Tibial artery (tissue), 4 donors: ENCODE measurements at regions of chr1 and their contacts with region 1.

Region 1: DNA sequence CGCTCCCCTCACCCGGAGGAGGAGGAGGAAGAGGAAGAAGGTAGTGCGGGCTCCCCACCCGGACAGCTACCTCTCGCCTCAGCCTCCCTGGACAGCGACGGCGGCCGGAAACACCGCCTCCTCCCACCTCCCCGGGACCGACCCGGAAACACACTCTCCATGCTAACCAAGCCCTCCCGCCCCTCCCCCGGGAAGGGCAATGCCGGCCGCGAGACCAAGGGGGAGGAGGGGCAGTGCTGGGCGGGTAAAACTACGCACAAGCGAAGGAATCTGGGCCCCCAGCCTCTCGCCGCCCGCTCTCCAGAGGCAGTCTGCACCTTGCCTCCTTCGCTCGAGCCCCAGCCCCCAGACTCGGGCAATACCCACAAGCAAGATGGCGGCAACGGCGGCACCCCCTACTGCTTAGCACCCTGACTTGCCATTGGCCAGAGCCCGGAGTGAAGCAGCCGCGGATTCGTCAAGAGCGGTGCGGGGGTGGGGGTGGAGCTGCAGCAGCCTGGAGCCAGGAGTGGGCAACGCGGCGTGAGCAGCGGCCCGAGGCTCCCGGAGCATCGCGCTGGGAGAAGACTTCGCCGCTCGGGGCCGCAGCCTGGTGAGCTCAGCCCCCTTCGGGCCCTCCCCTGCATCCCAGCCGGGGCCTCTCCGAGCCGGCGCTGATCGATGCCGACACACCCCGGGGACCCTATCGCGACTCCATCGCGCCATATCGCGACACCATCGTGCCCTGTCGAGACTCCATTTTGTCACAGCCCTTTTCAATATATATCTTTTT is at the starts of genes KIAA0319L and NCDN:
- DNase-seq: peak; percentile 97 to 98
- H3K4me3 ChIP-seq: peak within 1 kb of the TSS; percentile 86 to 98
- H3K27ac ChIP-seq: peak within 1 kb of the TSS; percentile 96 to 98
- H3K4me1 ChIP-seq: peaks cover 3 to 68% (median 44%) of the 10 kb centered on the region in 4 donors
- H3K27me3 ChIP-seq: no peaks in the 10 kb centered on the region
- CTCF ChIP-seq: no peak

Region 2: GRCh38 chr1:35192853-35193664 is 364.4 kb before region 1 on chr1 and contains the start of gene SFPQ:
- intact Hi-C with region 1: loop called (anchors 5 kb)
- DNase-seq: peak; percentile 98 to 99
- H3K4me3 ChIP-seq: peak within 1 kb of the TSS; percentile 96 to 100
- H3K27ac ChIP-seq: peak within 1 kb of the TSS; percentile 99
- H3K4me1 ChIP-seq: peaks cover 0 to 38% (median 33%) of the 10 kb centered on the region in 4 donors
- H3K27me3 ChIP-seq: no peaks in the 10 kb centered on the region
- CTCF ChIP-seq: no peak

Region 3: GRCh38 chr1:35451125-35451528 is 106.4 kb before region 1 on chr1:
- intact Hi-C with region 1: loop called (anchors 2 kb)
- DNase-seq: peak; percentile 81 to 88
- H3K4me3 ChIP-seq: no peak overlapping the region
- H3K27ac ChIP-seq: no peak overlapping the region
- H3K4me1 ChIP-seq: peaks cover 0 to 27% (median 25%) of the 10 kb centered on the region in 4 donors
- H3K27me3 ChIP-seq: no peaks in the 10 kb centered on the region
- CTCF ChIP-seq: peak; percentile 81 to 82

Region 4: GRCh38 chr1:35641233-35641866 is 83.9 kb after region 1 on chr1 and contains the start of gene PSMB2:
- intact Hi-C with region 1: loop called (anchors 5 kb)
- DNase-seq: peak; percentile 94 to 96
- H3K4me3 ChIP-seq: peak within 1 kb of the TSS; percentile 89 to 92
- H3K27ac ChIP-seq: peak within 1 kb of the TSS; percentile 90 to 93
- H3K4me1 ChIP-seq: peaks cover 0 to 47% (median 33%) of the 10 kb centered on the region in 4 donors
- H3K27me3 ChIP-seq: no peaks in the 10 kb centered on the region
- CTCF ChIP-seq: no peak